ENCODE measurements at regions of chr2 and their contacts with region 1.

Region 1: GRCh38 chr2:96951093-96951654 is 35.2 kb downstream of the FAM178B start:
- DNase-seq: peak; percentile 79
- H3K4me3 Mint-ChIP-seq: no peak overlapping the region
- H3K27ac Mint-ChIP-seq: no peak overlapping the region
- H3K4me1 Mint-ChIP-seq: peaks cover 28% of the 10 kb centered on the region
- H3K27me3 Mint-ChIP-seq: peaks cover 8% of the 10 kb centered on the region

Region 2: GRCh38 chr2:96868555-96869280 is 82.5 kb before region 1 on chr2:
- CTCF ChIA-PET with region 1: interaction called, 11 read pairs
- POLR2A ChIA-PET with region 1: interaction called, 6 read pairs
- DNase-seq: peak; percentile 75
- H3K4me3 Mint-ChIP-seq: peak overlapping the region; percentile 82
- H3K27ac Mint-ChIP-seq: peak overlapping the region; percentile 71
- H3K4me1 Mint-ChIP-seq: peaks cover 35% of the 10 kb centered on the region
- H3K27me3 Mint-ChIP-seq: peaks cover 10% of the 10 kb centered on the region

Region 3: GRCh38 chr2:96940001-96940615 is 11.1 kb before region 1 on chr2:
- CTCF ChIA-PET with region 1: interaction called, 10 read pairs
- POLR2A ChIA-PET with region 1: interaction called, 4 read pairs
- DNase-seq: no peak
- H3K4me3 Mint-ChIP-seq: no peak overlapping the region
- H3K27ac Mint-ChIP-seq: no peak overlapping the region
- H3K4me1 Mint-ChIP-seq: peaks cover 19% of the 10 kb centered on the region
- H3K27me3 Mint-ChIP-seq: peaks cover 30% of the 10 kb centered on the region

Region 4: GRCh38 chr2:97359861-97360588 is 408.9 kb after region 1 on chr2:
- CTCF ChIA-PET with region 1: no interaction called
- POLR2A ChIA-PET with region 1: no interaction called
- DNase-seq: no peak
- H3K4me3 Mint-ChIP-seq: no peak overlapping the region
- H3K27ac Mint-ChIP-seq: no peak overlapping the region
- H3K4me1 Mint-ChIP-seq: no peaks in the 10 kb centered on the region
- H3K27me3 Mint-ChIP-seq: peaks cover 22% of the 10 kb centered on the region